Body of pancreas (tissue), 4 donors: ENCODE measurements at regions of chr10 and their contacts with region 1.

Region 1: GRCh38 chr10:35635576-35635975 is 6.5 kb downstream of the FZD8 start:
- DNase-seq: peak; percentile 48 to 61 (median 50)
- ATAC-seq: peak; percentile 66
- H3K4me3 ChIP-seq: no peak overlapping the region
- H3K27ac ChIP-seq: no peak overlapping the region
- H3K4me1 ChIP-seq: peaks cover 7% of the 10 kb centered on the region
- H3K27me3 ChIP-seq: no peaks in the 10 kb centered on the region
- CTCF ChIP-seq: peak; percentile 76 to 94 (median 93)
- POLR2A ChIP-seq: no peak

Region 2: GRCh38 chr10:36779234-36779846 is 1143.8 kb after region 1 on chr10:
- intact Hi-C with region 1: loop called (anchors 5 kb)
- DNase-seq: peak; percentile 22 to 54 (median 34)
- ATAC-seq: peak; percentile 75
- H3K4me3 ChIP-seq: no peak overlapping the region
- H3K27ac ChIP-seq: no peak overlapping the region
- H3K4me1 ChIP-seq: no peaks in the 10 kb centered on the region
- H3K27me3 ChIP-seq: no peaks in the 10 kb centered on the region
- CTCF ChIP-seq: peak in 6 of 7 experiments; percentile 52 to 80 (median 77)
- POLR2A ChIP-seq: no peak

Region 3: GRCh38 chr10:36880898-36881297 is 1245.3 kb after region 1 on chr10:
- intact Hi-C with region 1: loop called (anchors 5 kb)
- DNase-seq: no peak
- ATAC-seq: no peak
- H3K4me3 ChIP-seq: no peak overlapping the region
- H3K27ac ChIP-seq: no peak overlapping the region
- H3K4me1 ChIP-seq: no peaks in the 10 kb centered on the region
- H3K27me3 ChIP-seq: no peaks in the 10 kb centered on the region
- CTCF ChIP-seq: peak in 6 of 7 experiments; percentile 31 to 59 (median 52)
- POLR2A ChIP-seq: no peak